Posterior vena cava (tissue), 2 donors: ENCODE measurements at regions of chr9 and their contacts with region 1.

Region 1: GRCh38 chr9:105341434-105342144 is 97.1 kb downstream of the SLC44A1 start:
- DNase-seq: no peak

Region 2: GRCh38 chr9:105290398-105290797 is 51.2 kb before region 1 on chr9:
- intact Hi-C with region 1: no loop called
- DNase-seq: no peak

Region 3: DNA sequence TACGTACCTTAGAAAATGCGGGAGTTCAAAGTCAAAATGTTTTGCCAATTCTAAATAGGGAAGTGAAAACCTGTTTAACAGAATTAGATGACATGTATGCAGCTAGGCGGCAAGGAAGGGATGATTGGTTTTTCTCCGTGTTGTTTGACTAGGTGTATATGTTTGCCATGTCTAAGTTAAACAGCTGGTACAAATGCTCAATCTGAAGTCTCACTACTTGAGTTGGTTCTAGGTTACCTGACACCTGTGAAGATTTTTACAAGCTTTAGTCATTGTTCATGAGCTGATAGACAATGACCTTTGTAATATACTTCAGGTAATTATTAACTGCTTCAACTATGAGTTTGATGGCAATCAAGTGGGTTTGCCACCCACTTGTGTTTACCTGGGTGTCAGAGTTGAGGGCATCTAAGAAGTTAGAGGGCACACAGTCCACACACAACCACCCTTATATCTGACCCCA is 22.8 kb before region 1 on chr9:
- intact Hi-C with region 1: no loop called
- DNase-seq: no peak

Region 4: GRCh38 chr9:105330755-105331154 is 10.8 kb before region 1 on chr9:
- intact Hi-C with region 1: loop called in 1 of 2 experiments (anchors 1 kb)
- DNase-seq: no peak

Region 5: DNA sequence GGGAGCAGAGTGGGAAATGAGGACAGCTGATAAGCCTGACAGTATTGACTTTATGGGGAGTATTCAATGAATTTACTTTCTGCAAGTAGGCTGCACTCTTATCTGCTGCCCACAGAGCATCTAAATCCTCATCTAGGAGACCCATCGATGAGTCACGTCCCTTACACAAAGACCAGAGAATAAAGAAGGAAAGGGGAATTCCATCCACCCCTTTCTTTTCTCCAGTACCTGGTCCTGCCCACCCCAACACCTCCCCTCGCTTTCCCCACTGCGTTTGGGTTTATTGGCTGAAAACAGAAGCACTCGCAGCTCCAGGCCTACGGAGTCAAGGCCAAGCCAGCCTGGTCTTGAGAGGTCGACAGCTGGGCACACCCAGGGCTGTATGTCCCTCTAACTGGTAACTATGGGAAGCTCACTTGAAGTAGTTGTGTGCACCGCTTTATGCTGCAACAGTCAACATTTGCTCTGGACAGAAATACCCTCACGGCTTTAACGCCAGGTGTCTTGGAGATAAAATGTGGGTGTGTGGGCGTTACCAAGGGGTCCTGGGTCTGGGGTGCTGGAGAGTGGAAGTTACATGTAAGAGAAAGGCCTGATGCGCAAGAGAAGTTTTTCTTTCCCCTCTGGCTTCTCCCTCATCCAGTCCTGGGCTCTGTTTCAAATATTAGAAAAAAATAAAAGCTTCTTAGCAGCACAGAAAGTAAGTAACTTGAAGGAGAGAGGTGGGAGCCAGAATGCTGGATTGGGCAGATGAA is 306.2 kb after region 1 on chr9:
- intact Hi-C with region 1: no loop called
- DNase-seq: no peak